ENCODE measurements at regions of chr7 and their contacts with region 1.

Region 1: DNA sequence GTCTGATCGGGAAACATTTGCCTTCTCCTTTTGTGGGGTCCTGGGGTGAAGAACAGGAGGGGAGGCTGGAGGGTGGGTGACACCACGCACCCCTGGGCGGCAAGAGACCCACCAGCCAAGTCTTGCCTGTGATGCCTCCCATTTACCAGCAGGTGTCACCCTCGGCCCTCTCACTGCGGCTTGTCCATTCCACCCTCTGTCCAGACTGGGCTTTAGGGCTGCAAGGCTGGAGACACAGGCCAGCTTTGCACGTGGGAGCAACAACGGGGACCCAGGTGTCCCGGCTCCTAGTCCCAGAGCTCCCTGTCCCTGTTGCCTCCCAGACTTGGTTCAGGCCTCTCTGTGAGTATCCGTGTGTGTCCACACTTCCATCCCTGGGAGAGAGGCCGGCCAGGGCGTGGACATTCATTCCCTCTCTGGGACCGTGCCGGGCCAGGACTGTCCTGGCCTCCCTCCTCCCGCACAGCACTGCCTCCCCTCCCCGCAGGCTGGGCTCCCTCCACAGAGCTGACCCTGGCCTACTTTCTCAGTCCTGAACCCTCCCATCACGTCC is 36.2 kb upstream of the GTF2IRD1 start:
- DNase-seq: peak; percentile 31 to 88 (median 74)

Region 2: GRCh38 chr7:74479961-74480829 is 62.7 kb after region 1 on chr7:
- intact Hi-C with region 1: no loop called
- DNase-seq: peak; percentile 53 to 90 (median 78)

Region 3: GRCh38 chr7:74569501-74570075 is 152.1 kb after region 1 on chr7:
- intact Hi-C with region 1: loop called (anchors 10 kb)
- DNase-seq: peak in 31 of 42 donors; percentile 4 to 80 (median 41)